ENCODE measurements at regions of chr6 and their contacts with region 1.

Region 1: DNA sequence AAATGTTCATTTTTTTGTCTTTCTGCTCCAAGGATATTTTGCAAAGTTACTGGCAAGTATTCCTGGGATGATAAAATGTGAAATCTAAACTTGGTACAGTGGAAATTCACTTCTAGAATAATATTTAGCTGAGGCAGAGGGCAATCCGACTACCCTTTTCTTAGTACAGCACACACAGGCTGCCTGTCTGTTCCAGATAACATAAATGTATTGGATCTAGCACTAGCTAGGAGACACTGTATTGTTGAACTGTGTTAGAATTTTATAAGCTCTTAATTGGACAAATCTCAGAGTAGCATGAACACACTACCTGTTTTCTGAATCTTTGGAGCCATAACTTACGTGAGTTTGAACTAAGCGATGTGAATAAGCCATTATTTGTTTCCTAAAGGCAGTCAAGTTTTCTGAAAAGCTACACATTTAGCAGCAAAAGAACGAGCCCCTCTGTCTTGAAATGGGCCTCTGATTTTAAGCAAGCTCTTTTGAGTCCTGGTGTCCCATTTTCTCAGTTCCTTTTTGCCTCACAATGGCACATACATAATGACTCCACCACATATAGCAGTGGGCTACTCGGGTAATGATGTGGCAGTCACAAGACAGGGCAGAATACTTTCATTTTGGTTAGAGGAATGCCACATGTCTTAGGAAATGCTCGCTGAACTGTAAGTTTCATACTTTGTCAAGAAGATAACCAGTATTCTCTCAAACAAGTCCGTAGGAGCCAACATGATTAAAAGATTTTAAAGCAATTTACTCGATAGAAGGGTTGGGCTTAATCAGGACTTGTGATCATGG is 116.5 kb upstream of the ESR1 start:
- DNase-seq: peak; percentile 83
- ATAC-seq: peak; percentile 97
- H3K4me3 ChIP-seq: peak overlapping the region; percentile 31; the same call in 1 of the 2 replicates
- H3K27ac ChIP-seq: no peak overlapping the region; the same call in 1 of the 2 replicates
- H3K4me1 ChIP-seq: peaks cover 17% of the 10 kb centered on the region
- H3K27me3 ChIP-seq: no peaks in the 10 kb centered on the region
- CTCF ChIP-seq: no peak
- EP300 ChIP-seq: peak; percentile 94 to 98
- POLR2A ChIP-seq: no peak
- RAD21 ChIP-seq: no peak

Region 2: DNA sequence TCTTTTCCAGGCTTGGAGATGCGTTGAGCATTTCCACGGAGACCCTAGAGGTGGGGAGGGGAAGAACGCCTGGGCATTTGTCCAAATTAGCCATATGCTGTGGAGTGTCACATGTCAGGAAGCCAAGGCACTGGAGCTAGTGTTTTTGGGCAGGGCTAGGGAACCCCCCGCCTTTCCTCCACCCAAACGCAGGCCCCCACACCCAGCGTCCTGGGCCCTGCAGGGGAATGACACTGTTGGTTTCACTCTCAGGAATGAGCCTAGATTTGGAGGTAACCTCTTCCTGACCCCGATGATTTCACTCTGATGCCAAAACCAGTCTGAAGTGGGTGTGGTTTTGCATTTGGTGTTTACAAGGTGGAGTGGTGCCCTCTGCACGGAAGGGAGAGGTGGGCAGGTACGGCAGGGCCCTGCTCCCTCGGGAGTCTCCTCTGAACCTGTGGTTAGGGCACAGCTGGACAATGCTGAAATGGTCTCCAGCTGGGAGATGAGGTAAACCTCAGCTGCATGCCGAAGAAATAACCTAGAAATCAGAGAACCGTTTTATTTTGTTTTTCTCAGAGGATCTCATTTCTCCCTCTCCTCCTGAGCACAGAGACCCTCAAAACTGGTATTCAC is 795.9 kb before region 1 on chr6:
- CTCF ChIA-PET with region 1: no interaction called
- POLR2A ChIA-PET with region 1: no interaction called
- RAD21 ChIA-PET with region 1: no interaction called
- SMC1A ChIA-PET with region 1: no interaction called
- in situ Hi-C with region 1: no loop called
- intact Hi-C with region 1: no loop called
- DNase-seq: peak; percentile 61
- ATAC-seq: peak; percentile 75
- H3K4me3 ChIP-seq: 0 out of 2 replicates have a peak overlapping the region, but pooled peaks have one; percentile 23
- H3K27ac ChIP-seq: peak overlapping the region; percentile 46; the same call in 1 of the 2 replicates
- H3K4me1 ChIP-seq: peaks cover 42% of the 10 kb centered on the region
- H3K27me3 ChIP-seq: no peaks in the 10 kb centered on the region
- CTCF ChIP-seq: no peak
- EP300 ChIP-seq: peak; percentile 55; a peak in 2 of 4 replicates
- POLR2A ChIP-seq: no peak
- RAD21 ChIP-seq: no peak

Region 3: GRCh38 chr6:151475653-151476523 is 215.1 kb before region 1 on chr6:
- CTCF ChIA-PET with region 1: no interaction called
- POLR2A ChIA-PET with region 1: no interaction called
- RAD21 ChIA-PET with region 1: no interaction called
- SMC1A ChIA-PET with region 1: no interaction called
- in situ Hi-C with region 1: no loop called
- intact Hi-C with region 1: no loop called
- DNase-seq: no peak
- ATAC-seq: peak; percentile 96
- H3K4me3 ChIP-seq: 0 out of 2 replicates have a peak overlapping the region, but pooled peaks have one; percentile 7
- H3K27ac ChIP-seq: no peak overlapping the region
- H3K4me1 ChIP-seq: no peaks in the 10 kb centered on the region
- H3K27me3 ChIP-seq: no peaks in the 10 kb centered on the region
- CTCF ChIP-seq: peak; percentile 58 to 72 (median 71); a peak in 5 of 6 replicates
- EP300 ChIP-seq: no peak
- POLR2A ChIP-seq: no peak
- RAD21 ChIP-seq: peak; percentile 63

Region 4: DNA sequence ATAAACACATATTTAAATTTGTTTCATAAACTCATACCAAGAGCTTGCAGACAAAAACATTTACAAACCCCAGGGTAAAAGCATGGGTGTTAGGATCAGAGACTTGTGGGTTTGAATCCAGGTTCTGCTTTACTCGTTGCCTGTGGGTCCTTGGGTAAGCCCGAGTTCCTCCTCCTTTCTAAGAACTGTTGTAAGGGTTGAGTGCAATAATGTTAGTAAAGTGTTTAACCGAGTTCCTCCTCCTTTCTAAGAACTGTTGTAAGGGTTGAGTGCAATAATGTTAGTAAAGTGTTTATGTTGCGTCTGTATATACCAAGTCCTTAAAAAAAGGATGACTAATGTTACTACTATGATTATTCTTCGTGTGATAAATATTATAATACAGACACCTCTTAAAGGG is 178.5 kb before region 1 on chr6:
- CTCF ChIA-PET with region 1: no interaction called
- POLR2A ChIA-PET with region 1: no interaction called
- RAD21 ChIA-PET with region 1: no interaction called
- SMC1A ChIA-PET with region 1: no interaction called
- in situ Hi-C with region 1: no loop called
- intact Hi-C with region 1: no loop called
- DNase-seq: no peak
- ATAC-seq: no peak
- H3K4me3 ChIP-seq: no peak overlapping the region
- H3K27ac ChIP-seq: no peak overlapping the region
- H3K4me1 ChIP-seq: no peaks in the 10 kb centered on the region
- H3K27me3 ChIP-seq: no peaks in the 10 kb centered on the region
- CTCF ChIP-seq: no peak
- EP300 ChIP-seq: no peak
- POLR2A ChIP-seq: no peak
- RAD21 ChIP-seq: no peak

Region 5: DNA sequence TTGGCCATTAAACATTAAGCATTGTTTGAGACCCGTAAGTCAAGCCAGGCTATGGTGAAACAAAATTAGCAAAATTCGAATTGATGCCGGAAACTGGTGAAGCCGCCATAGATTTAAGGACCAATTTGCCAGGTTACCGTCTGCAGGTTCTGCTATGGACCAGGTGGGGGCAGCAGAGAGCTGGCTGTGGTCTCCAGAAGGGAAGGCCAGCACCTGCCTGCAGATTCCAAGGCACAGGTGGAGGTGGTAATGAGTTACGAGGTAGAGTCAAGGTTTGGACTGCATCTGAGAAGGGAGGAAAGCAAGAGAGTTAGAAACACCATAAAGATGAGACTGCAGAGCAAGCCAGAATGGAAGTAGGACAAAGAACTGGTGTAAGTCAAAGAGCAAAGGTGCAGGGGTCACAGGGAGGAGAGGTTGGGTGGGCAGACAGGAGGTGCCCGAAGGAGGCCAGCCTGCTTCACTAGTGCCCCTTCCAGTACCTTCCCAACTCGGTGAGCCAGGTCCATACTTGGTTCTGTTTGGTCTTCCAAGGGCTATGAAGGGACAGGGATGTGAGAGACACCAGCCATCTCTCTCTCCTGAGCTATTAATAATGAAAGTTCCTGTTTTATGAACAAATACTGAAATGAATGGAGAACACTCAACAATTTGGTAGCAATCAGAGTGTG is 15.1 kb before region 1 on chr6:
- CTCF ChIA-PET with region 1: interaction called, 28 read pairs
- POLR2A ChIA-PET with region 1: interaction called, 3 read pairs
- RAD21 ChIA-PET with region 1: interaction called, 9 read pairs
- SMC1A ChIA-PET with region 1: interaction called, 32 read pairs
- in situ Hi-C with region 1: no loop called
- intact Hi-C with region 1: no loop called
- DNase-seq: peak; percentile 11
- ATAC-seq: peak; percentile 96
- H3K4me3 ChIP-seq: no peak overlapping the region
- H3K27ac ChIP-seq: no peak overlapping the region
- H3K4me1 ChIP-seq: peaks cover 5% of the 10 kb centered on the region; the same call in 1 of the 2 replicates
- H3K27me3 ChIP-seq: no peaks in the 10 kb centered on the region
- CTCF ChIP-seq: peak; percentile 95 to 99 (median 96)
- EP300 ChIP-seq: no peak
- POLR2A ChIP-seq: no peak
- RAD21 ChIP-seq: peak; percentile 90

Region 6: GRCh38 chr6:151729829-151730495 is 39.0 kb after region 1 on chr6:
- CTCF ChIA-PET with region 1: interaction called, 8 read pairs
- POLR2A ChIA-PET with region 1: interaction called, 3 read pairs
- RAD21 ChIA-PET with region 1: interaction called, 11 read pairs
- SMC1A ChIA-PET with region 1: interaction called, 6 read pairs
- in situ Hi-C with region 1: no loop called
- intact Hi-C with region 1: no loop called
- DNase-seq: no peak
- ATAC-seq: peak; percentile 79
- H3K4me3 ChIP-seq: no peak overlapping the region
- H3K27ac ChIP-seq: no peak overlapping the region
- H3K4me1 ChIP-seq: no peaks in the 10 kb centered on the region
- H3K27me3 ChIP-seq: no peaks in the 10 kb centered on the region
- CTCF ChIP-seq: no peak
- EP300 ChIP-seq: no peak
- POLR2A ChIP-seq: no peak
- RAD21 ChIP-seq: no peak

Region 7: GRCh38 chr6:151822260-151823111 is 131.5 kb after region 1 on chr6:
- CTCF ChIA-PET with region 1: interaction called, 7 read pairs
- POLR2A ChIA-PET with region 1: interaction called, 4 read pairs
- RAD21 ChIA-PET with region 1: interaction called, 13 read pairs
- SMC1A ChIA-PET with region 1: interaction called, 17 read pairs
- in situ Hi-C with region 1: no loop called
- intact Hi-C with region 1: no loop called
- DNase-seq: peak; percentile 32
- ATAC-seq: peak; percentile 96
- H3K4me3 ChIP-seq: no peak overlapping the region
- H3K27ac ChIP-seq: no peak overlapping the region
- H3K4me1 ChIP-seq: peaks cover 4% of the 10 kb centered on the region
- H3K27me3 ChIP-seq: no peaks in the 10 kb centered on the region
- CTCF ChIP-seq: no peak
- EP300 ChIP-seq: peak; percentile 68 to 73; a peak in 2 of 4 replicates
- POLR2A ChIP-seq: no peak
- RAD21 ChIP-seq: no peak

Region 8: GRCh38 chr6:152170705-152171667 is 480.0 kb after region 1 on chr6:
- CTCF ChIA-PET with region 1: interaction called, 5 read pairs
- POLR2A ChIA-PET with region 1: no interaction called
- RAD21 ChIA-PET with region 1: no interaction called
- SMC1A ChIA-PET with region 1: interaction called, 10 read pairs
- in situ Hi-C with region 1: no loop called
- intact Hi-C with region 1: no loop called
- DNase-seq: peak; percentile 89
- ATAC-seq: peak; percentile 98
- H3K4me3 ChIP-seq: peak overlapping the region; percentile 39; the same call in 1 of the 2 replicates
- H3K27ac ChIP-seq: peak overlapping the region; percentile 80
- H3K4me1 ChIP-seq: peaks cover 13% of the 10 kb centered on the region; the same call in 1 of the 2 replicates
- H3K27me3 ChIP-seq: no peaks in the 10 kb centered on the region
- CTCF ChIP-seq: no peak
- EP300 ChIP-seq: peak; percentile 86 to 88
- POLR2A ChIP-seq: no peak
- RAD21 ChIP-seq: no peak

Region 9: DNA sequence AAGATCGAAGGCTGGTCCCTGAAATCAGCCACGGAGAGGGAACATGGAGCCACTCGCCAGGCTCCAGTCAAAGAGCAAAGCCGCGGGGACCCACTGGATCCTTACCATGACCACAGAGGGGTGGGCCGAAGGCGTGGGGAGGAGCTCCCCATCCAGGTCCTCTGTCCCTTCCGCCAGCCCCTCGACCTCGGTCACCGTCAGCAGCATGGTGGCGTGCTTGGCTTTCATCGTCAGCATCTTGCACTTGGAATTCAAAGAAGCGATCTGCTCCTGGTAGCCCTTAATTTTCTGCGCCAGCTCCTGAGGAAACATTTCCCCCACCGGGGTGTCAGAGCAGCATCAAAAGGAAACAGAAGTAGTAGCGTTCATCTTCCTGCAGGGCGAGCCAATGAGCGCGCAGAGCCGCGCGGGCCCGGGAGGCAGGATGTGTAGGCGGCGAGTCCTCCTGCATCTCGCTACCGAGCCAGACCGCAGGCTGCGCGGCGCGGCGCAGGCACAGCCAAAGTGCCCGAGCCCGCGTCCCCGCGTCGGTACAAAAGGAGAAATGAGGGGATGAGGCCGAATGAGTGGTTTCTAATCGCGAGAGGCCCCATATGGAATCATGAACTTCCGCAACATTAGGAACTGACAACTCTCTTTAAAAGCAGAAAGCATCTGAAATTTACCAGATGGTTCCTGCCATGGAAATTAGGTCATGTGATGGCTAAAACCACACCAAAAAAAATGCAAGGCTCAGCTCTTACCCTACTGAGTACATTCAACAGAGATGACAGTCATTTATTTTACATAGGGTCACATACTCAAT is 611.0 kb after region 1 on chr6:
- CTCF ChIA-PET with region 1: interaction called, 24 read pairs
- POLR2A ChIA-PET with region 1: no interaction called
- RAD21 ChIA-PET with region 1: interaction called, 16 read pairs
- SMC1A ChIA-PET with region 1: interaction called, 16 read pairs
- in situ Hi-C with region 1: no loop called
- intact Hi-C with region 1: no loop called
- DNase-seq: peak; percentile 74
- ATAC-seq: peak; percentile 92
- H3K4me3 ChIP-seq: peak overlapping the region; percentile 72
- H3K27ac ChIP-seq: peak overlapping the region; percentile 84
- H3K4me1 ChIP-seq: peaks cover 6% of the 10 kb centered on the region
- H3K27me3 ChIP-seq: no peaks in the 10 kb centered on the region
- CTCF ChIP-seq: peak; percentile 51 to 56 (median 53)
- EP300 ChIP-seq: no peak; a peak in 2 of 4 replicates
- POLR2A ChIP-seq: peak; percentile 92
- RAD21 ChIP-seq: peak; percentile 50

Region 10: GRCh38 chr6:152552616-152553209 is 861.7 kb after region 1 on chr6:
- CTCF ChIA-PET with region 1: no interaction called
- POLR2A ChIA-PET with region 1: no interaction called
- RAD21 ChIA-PET with region 1: no interaction called
- SMC1A ChIA-PET with region 1: no interaction called
- in situ Hi-C with region 1: no loop called
- intact Hi-C with region 1: no loop called
- DNase-seq: peak; percentile 11
- ATAC-seq: peak; percentile 99
- H3K4me3 ChIP-seq: no peak overlapping the region
- H3K27ac ChIP-seq: no peak overlapping the region
- H3K4me1 ChIP-seq: no peaks in the 10 kb centered on the region
- H3K27me3 ChIP-seq: no peaks in the 10 kb centered on the region
- CTCF ChIP-seq: peak; percentile 72 to 79 (median 72)
- EP300 ChIP-seq: no peak
- POLR2A ChIP-seq: no peak
- RAD21 ChIP-seq: peak; percentile 78